AG04450 (cell line): ENCODE measurements at regions of chr1 and their contacts with region 1.

Region 1: DNA sequence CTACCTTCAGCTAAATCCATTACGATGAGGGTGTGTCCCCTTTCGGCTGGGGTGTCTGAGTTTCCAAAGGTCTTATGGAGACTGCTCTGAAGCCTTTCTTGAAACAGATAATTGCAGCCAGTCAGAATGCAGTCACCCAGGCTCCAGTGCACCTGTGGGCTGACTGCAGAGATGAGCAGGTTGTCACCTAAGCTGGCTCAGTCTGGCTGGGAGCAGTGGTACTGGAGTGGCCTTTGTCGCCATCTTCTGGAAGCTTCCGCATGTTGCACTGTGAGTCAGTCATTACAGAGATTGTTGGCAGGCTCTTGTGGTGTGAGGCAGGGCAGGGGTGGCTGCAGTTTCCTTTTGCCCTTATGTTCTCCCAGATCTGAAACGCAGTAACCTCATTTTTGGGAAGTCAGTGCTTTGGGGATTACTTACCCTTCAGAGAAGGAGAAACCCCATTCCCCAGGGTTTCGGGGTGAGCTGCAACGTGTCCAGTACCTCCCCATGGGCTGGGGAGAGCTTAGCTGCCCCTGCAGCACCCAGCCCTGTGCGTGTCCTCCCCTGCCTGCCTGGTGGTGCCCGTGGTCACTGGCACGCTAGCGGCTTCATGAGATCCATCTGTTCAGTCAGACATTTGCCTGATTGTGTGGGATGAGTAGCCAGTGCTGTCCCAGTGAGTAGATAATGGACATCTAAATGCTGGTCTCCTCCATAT is 48.0 kb downstream of the SMYD2 start:
- DNase-seq: peak; percentile 44
- H3K4me3 ChIP-seq: no peak overlapping the region
- H3K27ac ChIP-seq: no peak overlapping the region
- H3K27me3 ChIP-seq: no peaks in the 10 kb centered on the region
- CTCF ChIP-seq: peak; percentile 92

Region 2: DNA sequence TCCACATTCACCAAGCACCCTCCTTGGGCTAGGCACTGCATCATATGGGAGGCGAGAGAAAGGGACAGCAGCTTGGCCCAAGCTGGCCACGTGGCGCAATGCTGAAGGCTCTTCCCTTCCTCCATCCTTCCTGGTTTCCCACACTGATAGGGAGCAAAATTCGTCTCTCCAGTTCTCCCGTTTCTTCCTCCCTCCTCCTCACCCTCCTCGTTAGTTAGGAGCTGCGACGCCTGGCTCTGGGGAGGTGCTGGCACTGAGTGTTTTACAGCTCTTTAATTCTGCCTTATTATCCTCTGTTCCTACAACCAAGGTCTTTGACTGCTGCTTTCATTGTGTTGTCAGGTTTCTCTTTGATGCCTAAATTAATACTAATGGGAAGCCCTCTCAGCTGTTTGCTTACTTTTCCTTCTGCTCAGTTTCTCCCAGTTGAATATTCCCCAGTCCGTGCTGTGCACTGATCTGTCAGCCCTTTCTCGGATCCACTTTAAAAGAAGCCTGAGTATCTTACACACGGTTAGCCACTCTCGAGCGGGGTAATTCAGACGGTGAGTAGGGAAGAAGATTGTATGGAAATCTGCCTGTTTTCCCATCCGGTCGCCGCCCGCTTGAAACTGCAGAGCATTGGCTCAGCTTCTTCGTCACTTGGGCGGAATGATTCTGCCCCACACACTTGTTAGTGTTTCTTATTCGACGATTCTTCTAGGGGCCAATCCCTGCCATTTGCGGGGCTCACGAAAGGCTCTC is 104.1 kb before region 1 on chr1:
- CTCF ChIA-PET with region 1: interaction called, 429 read pairs
- POLR2A ChIA-PET with region 1: no interaction called
- DNase-seq: no peak
- H3K4me3 ChIP-seq: peak overlapping the region; percentile 54
- H3K27ac ChIP-seq: peak overlapping the region; percentile 21
- H3K27me3 ChIP-seq: peaks cover 16% of the 10 kb centered on the region
- CTCF ChIP-seq: no peak

Region 3: DNA sequence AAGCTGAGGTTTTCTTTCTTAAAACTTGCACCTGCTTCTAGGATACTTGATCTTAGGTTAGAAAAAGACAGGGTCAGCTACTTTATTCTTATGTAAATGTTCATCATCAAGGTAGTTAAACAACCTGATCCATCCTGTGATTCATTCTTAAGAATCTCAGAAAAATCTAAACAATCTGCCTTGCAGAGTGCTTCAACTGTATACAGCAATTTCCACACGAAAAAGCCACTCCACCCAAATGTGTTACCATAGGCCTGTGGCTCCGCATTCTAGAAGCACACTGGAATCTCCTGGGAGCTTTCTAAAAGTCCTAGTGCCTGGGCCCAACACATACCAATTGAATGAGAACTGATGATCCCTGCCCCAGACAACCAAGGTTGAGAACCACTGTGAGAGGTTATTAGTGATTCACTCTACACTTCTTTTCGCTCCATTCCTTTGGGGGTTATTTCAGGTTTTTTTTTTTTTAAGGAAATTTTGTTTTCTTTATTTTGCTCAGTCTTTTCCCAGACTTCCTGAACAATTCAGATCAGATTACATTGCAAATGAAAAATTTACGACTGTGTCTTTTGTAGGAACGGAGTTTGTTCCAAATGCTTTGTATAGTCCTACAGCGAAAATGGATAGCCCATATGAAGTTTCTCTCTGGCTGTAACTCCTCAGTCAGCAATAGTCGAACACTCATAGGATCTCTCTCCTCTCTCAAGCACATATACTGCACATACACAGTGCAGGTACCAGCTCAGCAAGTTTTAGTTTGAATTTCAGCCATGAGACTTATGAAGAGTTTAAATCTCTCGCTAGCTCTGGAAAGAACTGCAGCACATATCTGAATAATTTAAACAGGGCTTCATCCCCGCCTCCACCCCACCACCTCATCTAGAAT is 31.8 kb before region 1 on chr1:
- CTCF ChIA-PET with region 1: interaction called, 17 read pairs
- POLR2A ChIA-PET with region 1: no interaction called
- DNase-seq: peak; percentile 67
- H3K4me3 ChIP-seq: no peak overlapping the region
- H3K27ac ChIP-seq: peak overlapping the region; percentile 21
- H3K27me3 ChIP-seq: no peaks in the 10 kb centered on the region
- CTCF ChIP-seq: no peak

Region 4: DNA sequence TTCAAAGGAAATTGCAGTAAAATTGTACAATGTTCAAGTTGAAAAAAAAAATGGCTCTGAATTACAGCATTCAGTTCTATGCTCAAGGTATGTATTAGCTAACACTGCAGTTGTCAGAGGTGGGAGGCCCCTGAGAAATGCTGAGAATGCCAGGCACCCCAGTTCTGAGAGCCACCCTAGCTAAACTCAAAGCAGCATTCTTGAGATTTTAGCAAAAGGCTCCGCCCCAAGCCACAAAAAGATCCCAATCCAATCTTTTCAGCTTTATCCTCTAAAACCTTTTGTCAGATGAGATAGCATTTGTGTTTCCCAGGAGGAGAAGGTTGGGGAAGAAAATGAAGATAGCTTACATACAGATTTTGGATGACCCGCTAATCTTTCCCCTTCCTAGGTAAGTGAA is 20.9 kb after region 1 on chr1:
- CTCF ChIA-PET with region 1: interaction called, 40 read pairs
- POLR2A ChIA-PET with region 1: no interaction called
- DNase-seq: no peak
- H3K4me3 ChIP-seq: no peak overlapping the region
- H3K27ac ChIP-seq: peak overlapping the region; percentile 13
- H3K27me3 ChIP-seq: no peaks in the 10 kb centered on the region
- CTCF ChIP-seq: no peak

Region 5: DNA sequence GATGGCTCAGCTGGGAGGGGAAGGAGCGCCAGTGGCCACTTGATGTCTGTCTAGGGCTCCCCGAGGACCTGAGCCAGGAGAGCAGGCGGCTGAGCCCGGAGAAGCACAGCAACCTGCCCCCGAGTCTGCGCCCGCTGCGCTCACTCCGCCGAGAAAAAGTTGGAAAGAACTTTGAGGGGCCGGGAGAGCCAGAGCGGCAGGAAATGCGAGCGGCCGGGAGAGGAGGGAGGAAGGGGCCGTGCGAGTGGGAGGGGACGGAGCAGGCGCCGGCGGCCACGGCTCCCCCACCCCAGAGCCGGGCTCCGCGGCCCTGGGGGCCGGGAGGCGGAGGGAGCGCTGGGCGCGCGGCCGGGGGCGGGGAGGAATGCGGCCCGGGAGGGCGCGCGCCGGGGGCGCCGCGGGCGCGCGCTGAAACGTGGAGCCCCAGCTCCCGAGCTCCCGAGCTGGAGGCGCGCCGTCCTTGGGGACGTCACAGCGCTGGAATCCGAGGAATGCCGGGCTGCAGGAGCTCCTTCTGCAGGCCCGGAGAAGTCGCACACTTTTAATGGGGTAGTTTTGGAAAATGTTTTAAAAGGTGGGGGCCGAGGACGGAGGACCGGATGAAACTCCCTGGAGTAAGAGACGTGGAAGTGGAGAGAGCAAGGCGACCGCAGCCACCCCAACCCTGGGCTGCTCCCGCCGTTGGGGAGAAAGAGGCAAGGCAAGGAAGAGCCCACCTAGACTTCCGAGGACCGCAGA is 222.7 kb after region 1 on chr1 and contains the start of gene PTPN14:
- CTCF ChIA-PET with region 1: interaction called, 25 read pairs
- POLR2A ChIA-PET with region 1: interaction called, 4 read pairs
- DNase-seq: peak; percentile 87
- H3K4me3 ChIP-seq: peak within 1 kb of the TSS; percentile 96
- H3K27ac ChIP-seq: peak within 1 kb of the TSS; percentile 99
- H3K27me3 ChIP-seq: no peaks in the 10 kb centered on the region
- CTCF ChIP-seq: peak; percentile 51
- polyA plus RNA-seq, gene PTPN14: 30.3 and 34.2 TPM in 2 replicates

Region 6: DNA sequence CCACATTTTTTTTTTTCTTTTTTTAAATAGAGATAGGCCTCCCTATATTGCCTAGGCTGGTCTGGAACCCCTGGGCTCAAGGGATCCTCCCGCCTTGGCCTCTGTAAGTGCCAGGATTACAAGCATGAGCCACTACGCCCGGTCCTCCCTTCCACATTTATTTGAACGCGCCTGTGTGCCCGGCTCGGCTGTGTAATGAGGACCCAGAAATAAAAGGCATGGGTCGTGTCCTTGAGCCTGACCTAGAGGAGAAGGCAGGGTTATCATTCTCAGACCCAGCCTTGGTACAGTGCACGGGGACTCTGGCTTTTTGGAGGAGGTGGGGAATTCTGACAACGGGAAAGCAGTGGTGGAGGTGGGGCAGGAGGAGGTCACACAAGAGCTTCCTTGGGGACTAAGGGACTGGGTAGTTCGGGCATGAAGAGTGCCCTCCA is 274.9 kb after region 1 on chr1:
- CTCF ChIA-PET with region 1: interaction called, 14 read pairs
- POLR2A ChIA-PET with region 1: no interaction called
- DNase-seq: no peak
- H3K4me3 ChIP-seq: peak overlapping the region; percentile 80
- H3K27ac ChIP-seq: peak overlapping the region; percentile 11
- H3K27me3 ChIP-seq: no peaks in the 10 kb centered on the region
- CTCF ChIP-seq: no peak

Region 7: DNA sequence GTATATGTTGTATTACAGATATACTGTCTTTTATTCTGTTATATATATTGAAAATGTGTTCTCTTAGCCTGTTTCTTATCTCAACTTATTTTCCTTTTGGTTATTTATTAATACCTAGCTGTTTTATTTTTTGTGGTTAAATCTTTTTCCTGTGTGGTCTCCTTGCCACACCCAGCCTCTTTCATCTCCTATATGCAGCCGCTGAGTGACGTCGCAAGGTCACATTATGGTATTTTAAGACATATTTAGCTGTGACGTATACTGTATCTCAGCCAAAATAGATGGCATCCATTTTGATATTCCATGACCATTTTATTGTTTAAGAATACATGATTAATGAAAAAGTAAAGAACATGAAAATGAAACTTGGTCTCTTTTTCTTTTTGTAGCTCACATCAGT is 303.2 kb after region 1 on chr1:
- CTCF ChIA-PET with region 1: interaction called, 102 read pairs
- POLR2A ChIA-PET with region 1: no interaction called
- DNase-seq: no peak
- H3K4me3 ChIP-seq: no peak overlapping the region
- H3K27ac ChIP-seq: no peak overlapping the region
- H3K27me3 ChIP-seq: no peaks in the 10 kb centered on the region
- CTCF ChIP-seq: no peak